ENCODE measurements at regions of chr18 and their contacts with region 1.

Region 1: DNA sequence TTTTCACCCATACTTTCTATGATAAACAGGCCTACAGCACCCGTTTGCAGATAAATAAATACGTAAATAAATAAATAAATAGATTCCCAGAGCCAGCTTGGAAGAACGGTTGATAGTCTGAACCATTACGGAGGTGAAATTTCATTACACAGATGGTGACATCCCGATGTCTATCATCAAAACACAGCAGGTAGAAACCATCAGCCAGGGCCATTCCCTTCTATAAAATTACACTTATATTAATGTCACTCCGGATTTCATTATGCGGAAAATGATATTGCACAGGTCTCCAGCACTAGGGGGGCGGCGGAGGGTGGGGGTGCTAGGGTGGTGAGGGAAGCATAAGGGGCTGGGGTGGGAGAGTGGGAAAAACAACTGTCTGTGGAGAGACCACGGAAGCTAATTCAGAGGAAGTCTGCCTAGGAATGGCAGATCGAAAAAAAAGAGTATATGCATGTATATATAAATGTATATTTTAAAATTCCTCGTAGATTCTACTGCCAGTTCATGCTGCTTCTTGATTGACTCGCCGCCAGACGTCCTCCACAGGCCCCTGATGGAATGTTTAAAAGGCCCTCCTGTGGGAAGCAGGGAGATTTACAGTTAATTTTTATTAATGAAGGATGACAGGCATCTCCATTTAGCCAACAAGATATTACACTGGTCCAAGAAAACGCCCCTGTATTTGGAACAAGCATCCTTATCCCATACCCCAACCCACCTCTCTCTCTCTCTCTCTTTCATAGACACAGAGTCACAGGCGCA is 1906.0 kb upstream of the PIK3C3 start:
- DNase-seq: no peak
- H3K4me3 ChIP-seq: no peak overlapping the region
- H3K27ac ChIP-seq: no peak overlapping the region
- H3K4me1 ChIP-seq: no peaks in the 10 kb centered on the region
- H3K27me3 ChIP-seq: no peaks in the 10 kb centered on the region
- CTCF ChIP-seq: no peak
- POLR2A ChIP-seq: no peak

Region 2: GRCh38 chr18:38539373-38539772 is 1509.7 kb before region 1 on chr18:
- intact Hi-C with region 1: no loop called
- DNase-seq: no peak
- H3K4me3 ChIP-seq: no peak overlapping the region
- H3K27ac ChIP-seq: no peak overlapping the region
- H3K4me1 ChIP-seq: no peaks in the 10 kb centered on the region
- H3K27me3 ChIP-seq: no peaks in the 10 kb centered on the region
- CTCF ChIP-seq: no peak
- POLR2A ChIP-seq: no peak

Region 3: GRCh38 chr18:39480494-39481195 is 568.4 kb before region 1 on chr18:
- intact Hi-C with region 1: loop called (anchors 5 kb)
- DNase-seq: no peak
- H3K4me3 ChIP-seq: no peak overlapping the region
- H3K27ac ChIP-seq: no peak overlapping the region
- H3K4me1 ChIP-seq: no peaks in the 10 kb centered on the region
- H3K27me3 ChIP-seq: no peaks in the 10 kb centered on the region
- CTCF ChIP-seq: no peak
- POLR2A ChIP-seq: no peak

Region 4: DNA sequence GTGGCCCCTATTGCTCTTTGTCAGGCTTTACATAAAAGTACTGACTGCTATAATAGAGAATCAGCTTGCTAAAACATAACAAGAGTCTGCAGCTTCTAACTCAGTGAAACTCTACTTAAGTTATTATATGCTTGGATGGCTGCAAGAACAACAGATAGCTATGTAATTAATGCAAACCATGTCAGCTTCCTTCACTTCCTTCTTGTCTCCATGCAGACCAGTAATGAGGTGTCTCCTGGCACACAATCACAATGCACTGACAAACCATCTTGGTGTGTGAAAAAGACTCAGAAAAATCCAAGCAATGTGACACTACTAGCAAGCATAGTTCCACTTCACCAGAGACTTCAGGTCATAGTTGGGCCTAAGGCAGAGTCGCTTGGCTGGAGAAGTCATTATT is 162.9 kb before region 1 on chr18:
- intact Hi-C with region 1: no loop called
- DNase-seq: no peak
- H3K4me3 ChIP-seq: no peak overlapping the region
- H3K27ac ChIP-seq: no peak overlapping the region
- H3K4me1 ChIP-seq: no peaks in the 10 kb centered on the region
- H3K27me3 ChIP-seq: no peaks in the 10 kb centered on the region
- CTCF ChIP-seq: no peak
- POLR2A ChIP-seq: no peak

Region 5: DNA sequence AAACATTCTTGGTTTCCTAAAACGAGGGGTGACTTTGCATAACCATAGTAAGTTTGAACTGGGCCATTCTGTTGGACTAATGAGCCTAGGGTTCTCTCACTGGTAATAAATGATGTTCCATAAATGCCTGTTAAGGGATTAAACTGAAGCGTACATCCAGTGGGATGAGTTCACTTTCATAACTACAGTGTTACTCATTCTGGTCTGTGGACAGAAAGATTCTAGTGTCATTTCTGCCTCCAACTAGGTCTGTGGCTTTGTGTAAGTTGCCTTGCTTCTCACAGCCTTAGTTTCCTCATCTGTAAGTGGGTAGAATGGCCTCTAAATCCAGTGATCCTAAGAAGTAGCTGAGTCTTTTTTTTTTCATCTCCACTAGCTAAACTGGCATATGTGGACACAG is 45.4 kb after region 1 on chr18:
- intact Hi-C with region 1: no loop called
- DNase-seq: no peak
- H3K4me3 ChIP-seq: no peak overlapping the region
- H3K27ac ChIP-seq: no peak overlapping the region
- H3K4me1 ChIP-seq: no peaks in the 10 kb centered on the region
- H3K27me3 ChIP-seq: no peaks in the 10 kb centered on the region
- CTCF ChIP-seq: no peak
- POLR2A ChIP-seq: no peak

Measured in breast epithelium (tissue), 4 donors.